K562 (cell line): ENCODE measurements at regions of chr15 and their contacts with region 1.

Region 1: GRCh38 chr15:52568601-52569256 is at the start of gene ARPP19:
- DNase-seq: peak; percentile 93 to 96 (median 94)
- ATAC-seq: peak; percentile 89
- H3K4me3 ChIP-seq: peak within 1 kb of the TSS; percentile 69
- H3K27ac ChIP-seq: peak within 1 kb of the TSS; percentile 90
- H3K4me1 ChIP-seq: peaks cover 10 to 13% of the 10 kb centered on the region in 2 experiments; a peak in 4 of 5 replicates
- H3K27me3 ChIP-seq: no peaks in the 10 kb centered on the region
- CTCF ChIP-seq: peak; percentile 10 to 24 (median 13); a peak in 2 of 6 replicates
- EP300 ChIP-seq: no peak
- POLR2A ChIP-seq: peak; percentile 77
- RAD21 ChIP-seq: peak; percentile 21 to 28; a peak in 3 of 4 replicates
- polyA plus RNA-seq, gene ARPP19: 33.3 to 35.4 TPM

Region 2: GRCh38 chr15:52200831-52201365 is 367.8 kb before region 1 on chr15:
- CTCF ChIA-PET with region 1: no interaction called
- POLR2A ChIA-PET with region 1: no interaction called
- in situ Hi-C with region 1: no loop called
- intact Hi-C with region 1: no loop called
- DNase-seq: no peak
- ATAC-seq: no peak
- H3K4me3 ChIP-seq: no peak overlapping the region
- H3K27ac ChIP-seq: no peak overlapping the region
- H3K4me1 ChIP-seq: no peaks in the 10 kb centered on the region
- H3K27me3 ChIP-seq: peaks cover 8 to 31% of the 10 kb centered on the region in 2 experiments; a peak in 4 of 5 replicates
- CTCF ChIP-seq: no peak
- EP300 ChIP-seq: no peak
- POLR2A ChIP-seq: no peak
- RAD21 ChIP-seq: no peak

Region 3: DNA sequence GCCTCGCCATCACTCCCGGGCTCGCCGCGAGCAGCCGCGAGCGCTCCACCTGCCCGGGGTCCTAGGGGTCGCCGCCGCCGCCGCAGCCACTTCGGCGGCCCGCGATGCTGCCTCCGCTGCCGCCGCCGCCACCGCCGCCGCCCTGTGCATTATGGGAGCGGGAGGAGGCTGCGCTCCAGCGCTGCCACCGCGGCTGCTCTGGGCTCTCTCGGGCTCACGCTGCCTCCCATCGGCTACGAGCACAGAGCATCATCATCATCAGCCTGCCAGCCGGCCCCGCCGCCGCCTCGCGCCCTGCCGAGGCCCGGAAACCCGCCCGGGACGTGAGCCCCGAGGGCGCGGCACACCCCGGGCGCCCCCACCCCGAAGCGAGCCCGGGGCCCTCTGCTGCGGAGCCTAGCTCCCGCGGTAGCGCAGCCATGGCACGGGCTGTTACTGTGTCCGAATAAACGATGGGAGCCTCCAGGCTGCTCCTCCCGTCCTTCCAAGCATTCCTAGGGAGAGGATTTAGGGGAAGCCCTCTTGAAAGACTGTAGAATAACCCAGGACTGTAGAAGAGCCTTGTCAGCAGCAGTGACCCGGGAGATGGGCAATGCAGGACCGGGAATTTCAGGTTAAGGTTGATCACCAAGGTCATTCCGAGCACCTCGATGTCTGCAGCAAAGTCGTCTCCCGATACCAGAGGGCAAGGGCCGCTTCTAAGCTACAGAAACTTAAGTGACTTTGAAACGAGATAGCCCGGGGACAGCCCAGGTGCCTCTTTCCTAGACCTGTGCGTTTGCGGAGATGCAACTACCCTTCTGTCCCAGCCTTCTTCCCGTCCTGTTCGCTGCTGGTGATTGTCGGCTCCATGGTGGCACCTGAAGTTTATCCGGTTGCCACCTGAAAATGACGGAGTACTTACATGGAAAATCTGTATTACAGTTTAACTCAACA is 39.5 kb before region 1 on chr15:
- CTCF ChIA-PET with region 1: no interaction called
- POLR2A ChIA-PET with region 1: no interaction called
- in situ Hi-C with region 1: no loop called
- intact Hi-C with region 1: loop called (anchors 5 kb)
- DNase-seq: peak in 1 of 4 experiments; percentile 47
- ATAC-seq: peak; percentile 77
- H3K4me3 ChIP-seq: peak overlapping the region; percentile 65
- H3K27ac ChIP-seq: no peak overlapping the region
- H3K4me1 ChIP-seq: peaks cover 0 to 14% of the 10 kb centered on the region in 2 experiments; a peak in 3 of 5 replicates
- H3K27me3 ChIP-seq: peaks cover 26 to 39% of the 10 kb centered on the region in 2 experiments
- CTCF ChIP-seq: no peak
- EP300 ChIP-seq: no peak
- POLR2A ChIP-seq: no peak
- RAD21 ChIP-seq: no peak

Region 4: DNA sequence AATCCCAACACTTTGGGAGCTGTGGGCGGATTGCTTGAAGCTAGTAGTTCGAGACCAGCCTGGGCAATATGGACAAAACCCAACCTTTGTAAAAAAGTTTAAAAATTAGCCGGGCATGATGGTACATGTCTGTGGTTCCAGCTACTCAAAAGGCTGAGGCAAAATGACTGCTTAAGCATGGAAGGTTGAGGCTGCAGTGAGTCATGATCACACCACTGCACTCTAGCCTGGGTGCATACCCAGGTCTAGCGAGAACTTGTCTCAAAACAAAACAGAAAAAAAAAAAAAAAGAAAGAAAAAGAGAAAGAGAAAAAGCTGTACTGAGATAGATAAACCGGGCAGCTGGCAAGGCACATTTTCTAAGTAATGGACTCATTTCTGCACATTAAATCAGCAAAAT is 10.5 kb before region 1 on chr15:
- CTCF ChIA-PET with region 1: no interaction called
- POLR2A ChIA-PET with region 1: interaction called, 11 read pairs
- in situ Hi-C with region 1: no loop called
- intact Hi-C with region 1: no loop called
- DNase-seq: peak in 1 of 4 experiments; percentile 54
- ATAC-seq: peak; percentile 62
- H3K4me3 ChIP-seq: no peak overlapping the region
- H3K27ac ChIP-seq: peak overlapping the region; percentile 3; the same call in 1 of the 3 replicates
- H3K4me1 ChIP-seq: peaks cover 0 to 28% of the 10 kb centered on the region in 2 experiments; a peak in 3 of 5 replicates
- H3K27me3 ChIP-seq: no peaks in the 10 kb centered on the region
- CTCF ChIP-seq: no peak
- EP300 ChIP-seq: no peak
- POLR2A ChIP-seq: no peak
- RAD21 ChIP-seq: no peak

Region 5: DNA sequence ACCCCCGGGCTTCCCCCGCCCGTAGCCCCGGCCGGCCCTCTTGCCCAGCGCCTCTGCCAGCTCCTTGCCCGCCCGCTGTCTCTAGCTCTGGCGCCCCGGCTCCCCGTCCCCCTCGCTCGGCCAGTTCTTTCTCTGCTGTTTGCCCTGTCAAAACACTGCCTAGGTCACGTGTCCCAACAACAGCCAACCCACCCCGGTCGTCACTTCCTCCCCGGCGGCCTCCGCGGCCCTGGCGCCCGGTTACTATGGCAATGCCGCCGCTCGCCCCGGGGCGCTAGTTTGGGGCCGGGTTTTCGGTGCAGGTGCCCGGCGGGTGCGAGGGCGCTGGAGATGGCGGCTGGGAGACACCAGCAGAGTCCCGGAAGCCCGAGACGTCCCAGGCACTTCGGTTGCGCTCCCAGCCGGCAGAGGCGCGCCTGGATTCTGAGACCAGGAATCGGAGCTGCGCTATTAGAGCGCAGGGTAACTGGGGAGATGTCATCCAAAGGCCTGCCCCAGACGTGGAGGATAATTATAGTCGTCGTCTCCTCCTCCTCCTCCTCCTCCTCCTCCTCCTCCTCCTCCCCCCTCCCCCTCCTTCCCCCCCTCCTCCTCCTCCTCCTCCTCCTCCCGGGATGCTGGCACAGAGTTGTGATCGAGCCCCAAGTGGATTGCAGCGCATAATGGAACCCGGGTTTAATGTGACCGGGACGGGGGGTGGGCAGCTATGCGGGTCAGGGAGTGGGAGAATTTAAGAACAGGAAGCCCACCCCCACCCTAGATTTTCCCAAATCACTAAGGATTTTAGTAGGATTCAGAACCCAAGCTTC is 110.7 kb after region 1 on chr15 and contains the start of gene ATOSA:
- CTCF ChIA-PET with region 1: no interaction called
- POLR2A ChIA-PET with region 1: interaction called, 3 read pairs
- in situ Hi-C with region 1: no loop called
- intact Hi-C with region 1: loop called (anchors 5 kb)
- DNase-seq: peak; percentile 87 to 89 (median 88)
- ATAC-seq: peak; percentile 91
- H3K4me3 ChIP-seq: peak within 1 kb of the TSS; percentile 87
- H3K27ac ChIP-seq: peak within 1 kb of the TSS; percentile 80
- H3K4me1 ChIP-seq: peaks cover 10 to 14% of the 10 kb centered on the region in 2 experiments; a peak in 4 of 5 replicates
- H3K27me3 ChIP-seq: no peaks in the 10 kb centered on the region; a peak in 1 of 5 replicates
- CTCF ChIP-seq: no peak
- EP300 ChIP-seq: no peak
- POLR2A ChIP-seq: no peak; the same call in 1 of the 2 replicates
- RAD21 ChIP-seq: no peak
- polyA plus RNA-seq, gene ATOSA: 2.0 to 2.1 TPM